ENCODE measurements at regions of chr2 and their contacts with region 1.

Region 1: GRCh38 chr2:105438104-105438929 is 39.5 kb upstream of the FHL2 start:
- DNase-seq: no peak
- ATAC-seq: peak; percentile 88
- H3K4me3 ChIP-seq: peak overlapping the region; percentile 21 to 25
- H3K27ac ChIP-seq: peak overlapping the region; percentile 98
- H3K4me1 ChIP-seq: peaks cover 50% of the 10 kb centered on the region
- H3K27me3 ChIP-seq: no peaks in the 10 kb centered on the region
- CTCF ChIP-seq: no peak

Region 2: GRCh38 chr2:105385731-105386540 is 52.4 kb before region 1 on chr2:
- CTCF ChIA-PET with region 1: no interaction called
- POLR2A ChIA-PET with region 1: interaction called, 10 read pairs
- in situ Hi-C with region 1: no loop called
- intact Hi-C with region 1: no loop called
- DNase-seq: no peak
- ATAC-seq: no peak
- H3K4me3 ChIP-seq: no peak overlapping the region
- H3K27ac ChIP-seq: peak overlapping the region; percentile 100
- H3K4me1 ChIP-seq: peaks cover 98% of the 10 kb centered on the region
- H3K27me3 ChIP-seq: no peaks in the 10 kb centered on the region
- CTCF ChIP-seq: no peak